Adrenal gland (tissue), 19 donors: ENCODE measurements at regions of chr17 and their contacts with region 1.

Region 1: DNA sequence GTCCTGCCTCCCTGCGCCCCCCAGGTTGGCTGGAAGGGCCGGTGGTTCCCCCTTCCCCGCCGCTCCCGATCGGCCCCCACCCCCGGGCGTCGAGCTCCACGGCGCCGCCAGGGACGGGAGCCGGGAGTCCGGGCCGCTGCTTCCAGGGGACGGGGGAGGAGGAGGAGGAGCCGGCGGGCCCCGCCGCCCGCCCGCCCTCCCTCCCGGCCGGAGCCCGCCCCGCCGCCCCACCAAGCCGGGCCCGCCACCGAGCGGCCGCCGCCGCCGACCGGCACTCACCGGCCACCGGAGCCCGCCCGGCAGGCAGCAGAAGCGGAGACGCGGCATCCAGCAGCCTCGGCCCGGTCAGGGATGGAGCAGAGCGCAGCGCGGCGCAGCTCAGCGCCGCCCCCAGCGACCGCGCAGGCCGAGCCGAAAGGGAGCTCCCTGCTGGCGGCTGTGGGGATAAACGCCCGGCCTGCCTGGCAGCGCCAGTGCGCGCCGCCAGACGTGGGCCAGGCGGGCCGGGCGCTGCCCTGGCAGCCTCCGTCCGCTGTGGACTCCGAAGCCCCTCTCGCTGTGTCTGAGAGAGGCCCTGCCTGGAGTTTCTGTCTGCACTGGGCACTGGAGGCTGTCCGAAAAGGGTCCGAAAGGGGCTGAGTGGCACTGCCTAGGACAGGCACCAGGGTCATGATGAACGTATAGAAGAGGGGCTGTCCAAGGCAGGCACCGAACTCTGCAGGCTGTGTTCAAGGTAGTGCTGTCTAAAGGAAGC is at the start of gene MYO18A:
- DNase-seq: peak; percentile 71 to 83 (median 82)
- H3K4me3 ChIP-seq: peak within 1 kb of the TSS in 2 of 4 donors; percentile 47 to 72
- H3K27ac ChIP-seq: peak within 1 kb of the TSS in 3 of 5 donors; percentile 57 to 92 (median 81)
- H3K4me1 ChIP-seq: peaks cover 10 to 41% of the 10 kb centered on the region in 2 donors
- H3K27me3 ChIP-seq: no peaks in the 10 kb centered on the region
- CTCF ChIP-seq: peak; percentile 29 to 97 (median 76)
- POLR2A ChIP-seq: peak; percentile 23 to 43
- total RNA-seq, gene MYO18A: 19.6 to 59.0 (median 39.1) TPM

Region 2: DNA sequence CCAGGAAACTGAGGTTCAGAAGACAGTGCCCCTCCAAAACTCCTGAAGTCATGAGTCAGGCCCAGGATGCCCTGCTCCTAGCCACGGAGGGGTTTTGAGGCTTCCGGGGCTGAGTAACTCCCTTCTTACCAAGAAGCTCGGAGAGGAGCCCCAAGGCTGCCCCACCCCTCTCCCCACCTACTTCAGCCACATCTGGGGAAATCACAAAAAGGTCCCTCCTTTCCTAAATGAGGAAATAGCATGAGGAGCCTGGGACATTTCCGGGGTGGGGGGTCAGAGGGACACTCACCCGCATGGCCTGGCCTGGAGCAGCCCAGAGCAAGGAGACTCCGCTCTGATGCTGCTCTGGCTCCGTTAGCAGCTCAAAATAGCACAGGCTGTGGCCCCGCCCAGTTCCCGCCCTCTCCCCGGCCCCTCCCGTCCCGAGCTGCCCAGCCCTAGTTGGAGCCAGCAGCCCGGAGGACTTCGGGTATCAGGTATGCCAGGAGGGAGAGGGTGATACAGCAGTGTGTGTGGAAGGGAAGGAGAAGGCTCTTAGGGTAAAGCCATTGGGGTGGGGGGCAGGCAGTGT is 40.1 kb before region 1 on chr17:
- intact Hi-C with region 1: loop called (anchors 5 kb)
- DNase-seq: peak; percentile 86 to 94 (median 90)
- H3K4me3 ChIP-seq: peak overlapping the region in 1 of 4 donors; percentile 42
- H3K27ac ChIP-seq: peak overlapping the region; percentile 3 to 85 (median 68)
- H3K4me1 ChIP-seq: peaks cover 21 to 61% of the 10 kb centered on the region in 2 donors
- H3K27me3 ChIP-seq: no peaks in the 10 kb centered on the region
- CTCF ChIP-seq: no peak
- POLR2A ChIP-seq: peak in 1 of 2 donors; percentile 66